SK-N-SH (cell line): ENCODE measurements at regions of chr2 and their contacts with region 1.

Region 1: GRCh38 chr2:164992818-164993217 is 37.5 kb upstream of the SLC38A11 start:
- DNase-seq: peak; percentile 45
- H3K4me3 ChIP-seq: no peak overlapping the region
- H3K27ac ChIP-seq: peak overlapping the region in 1 of 2 experiments; percentile 5; a peak in 1 of 4 replicates
- H3K4me1 ChIP-seq: peaks cover 0 to 18% of the 10 kb centered on the region in 2 experiments; a peak in 2 of 4 replicates
- H3K27me3 ChIP-seq: no peaks in the 10 kb centered on the region
- CTCF ChIP-seq: peak; percentile 51
- EP300 ChIP-seq: no peak
- RAD21 ChIP-seq: peak; percentile 81

Region 2: DNA sequence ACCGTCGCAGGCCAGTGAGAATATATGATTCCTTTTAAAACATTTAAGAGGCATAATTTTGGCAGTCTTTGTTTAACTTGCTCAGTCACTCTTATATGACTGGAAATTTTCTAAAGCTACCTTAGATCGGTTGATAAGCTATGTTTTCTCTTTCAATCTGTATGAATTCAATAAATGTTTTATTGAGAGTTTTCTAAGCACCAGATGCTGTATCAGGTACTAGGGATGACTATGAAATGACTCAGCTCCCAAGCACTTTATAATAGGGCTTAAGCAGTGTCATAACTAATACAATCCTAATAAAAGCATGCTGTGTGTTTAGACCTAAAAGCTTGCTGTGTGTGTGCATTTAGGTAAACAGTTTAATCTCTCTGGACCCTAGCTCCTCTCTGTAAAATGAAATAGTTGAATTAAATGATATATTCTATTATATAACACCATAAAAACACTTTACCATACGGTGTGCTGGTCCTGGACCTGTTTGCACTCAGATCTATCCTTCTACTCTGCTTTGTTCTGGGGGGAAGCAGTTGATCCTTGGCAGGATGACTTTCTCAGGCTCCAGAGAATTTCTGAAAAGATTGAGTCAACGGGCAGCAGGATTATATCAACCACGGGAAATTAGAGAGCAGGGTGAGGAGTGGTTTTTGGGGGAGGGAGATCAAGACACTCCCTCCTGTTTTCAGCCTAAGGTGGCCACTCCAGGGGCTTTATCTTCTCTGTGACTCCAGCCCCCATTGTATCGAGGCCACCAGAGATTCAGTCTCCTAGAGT is 11.4 kb before region 1 on chr2:
- CTCF ChIA-PET with region 1: interaction called, 25 read pairs
- POLR2A ChIA-PET with region 1: no interaction called
- DNase-seq: no peak
- H3K4me3 ChIP-seq: peak overlapping the region; percentile 22 to 29; a peak in 3 of 4 replicates
- H3K27ac ChIP-seq: peak overlapping the region; percentile 79 to 94
- H3K4me1 ChIP-seq: peaks cover 4 to 20% of the 10 kb centered on the region in 2 experiments; a peak in 2 of 4 replicates
- H3K27me3 ChIP-seq: no peaks in the 10 kb centered on the region
- CTCF ChIP-seq: no peak
- EP300 ChIP-seq: peak in 1 of 2 experiments; percentile 35; a peak in 1 of 4 replicates
- RAD21 ChIP-seq: no peak

Region 3: GRCh38 chr2:165293440-165294353 is 300.9 kb after region 1 on chr2:
- CTCF ChIA-PET with region 1: interaction called, 17 read pairs
- POLR2A ChIA-PET with region 1: no interaction called
- DNase-seq: peak; percentile 67
- H3K4me3 ChIP-seq: peak overlapping the region; percentile 86 to 90
- H3K27ac ChIP-seq: peak overlapping the region in 1 of 2 experiments; percentile 90; a peak in 2 of 4 replicates
- H3K4me1 ChIP-seq: peaks cover 0 to 11% of the 10 kb centered on the region in 2 experiments; a peak in 2 of 4 replicates
- H3K27me3 ChIP-seq: no peaks in the 10 kb centered on the region
- CTCF ChIP-seq: peak; percentile 76
- EP300 ChIP-seq: no peak
- RAD21 ChIP-seq: peak; percentile 70